ENCODE measurements at regions of chr22 and their contacts with region 1.

Region 1: DNA sequence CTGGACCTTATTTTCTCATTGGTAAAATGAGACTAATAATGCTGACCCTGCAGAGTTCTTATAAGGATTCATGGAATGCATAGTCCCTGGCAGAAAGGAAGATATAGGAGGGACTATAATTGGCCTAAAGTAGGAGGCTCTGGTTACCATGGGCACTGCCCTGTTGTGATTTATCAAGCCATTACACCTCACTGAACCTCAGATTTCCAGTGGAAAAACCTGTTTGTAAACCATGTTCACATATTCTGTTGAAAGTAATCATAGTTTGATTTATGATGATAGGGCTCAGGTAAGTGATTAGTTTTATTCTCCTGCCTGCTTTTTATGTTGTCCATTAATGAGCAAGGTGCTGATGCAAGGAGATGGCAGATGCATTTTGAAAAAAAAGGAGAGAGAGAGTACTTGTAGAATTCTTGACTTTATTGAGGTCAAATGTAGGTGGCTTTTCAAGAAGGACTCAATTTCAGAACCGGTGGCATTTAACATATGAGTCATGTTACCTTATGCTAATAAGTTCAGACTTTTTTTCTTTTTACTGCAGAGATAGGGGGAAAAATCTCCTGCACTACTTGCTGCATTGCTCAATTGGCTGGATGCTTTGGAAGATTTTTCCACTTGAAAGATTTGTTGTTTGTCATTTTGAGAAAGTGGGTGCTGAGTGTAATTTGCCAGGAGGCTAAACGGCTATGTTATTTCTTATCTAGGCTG is 14.6 kb downstream of the NF2 start:
- DNase-seq: no peak
- H3K4me3 Mint-ChIP-seq: no peak overlapping the region
- H3K27ac Mint-ChIP-seq: no peak overlapping the region
- H3K4me1 Mint-ChIP-seq: peaks cover 27% of the 10 kb centered on the region
- H3K27me3 Mint-ChIP-seq: no peaks in the 10 kb centered on the region

Region 2: DNA sequence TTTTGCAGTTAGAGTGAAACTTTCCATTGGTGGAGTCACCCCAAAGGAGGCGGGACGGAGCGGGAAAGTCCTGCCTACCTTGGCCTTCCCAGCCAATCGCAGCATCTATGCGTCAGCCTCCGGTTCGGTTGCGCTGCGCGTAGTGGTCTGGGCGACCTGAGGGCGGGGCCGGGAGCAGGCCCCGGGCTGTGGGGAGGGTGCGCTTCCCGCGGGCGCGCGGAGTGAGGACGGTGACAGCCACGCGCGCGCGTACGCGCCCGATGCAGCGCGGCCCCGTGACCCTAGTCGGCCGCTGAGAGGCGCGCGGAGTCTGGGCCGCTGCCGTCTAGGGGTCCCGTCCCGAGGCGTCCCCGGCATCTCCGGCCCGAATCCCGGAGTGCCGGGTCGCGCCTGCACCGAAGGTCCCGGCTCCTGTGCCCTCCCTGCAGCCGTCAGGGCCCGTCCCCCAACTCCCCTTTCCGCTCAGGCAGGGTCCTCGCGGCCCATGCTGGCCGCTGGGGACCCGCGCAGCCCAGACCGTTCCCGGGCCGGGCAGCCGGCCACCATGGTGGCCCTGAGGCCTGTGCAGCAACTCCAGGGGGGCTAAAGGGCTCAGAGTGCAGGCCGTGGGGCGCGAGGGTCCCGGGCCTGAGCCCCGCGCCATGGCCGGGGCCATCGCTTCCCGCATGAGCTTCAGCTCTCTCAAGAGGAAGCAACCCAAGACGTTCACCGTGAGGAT is 14.6 kb before region 1 on chr22 and contains the start of gene NF2:
- CTCF ChIA-PET with region 1: interaction called, 11 read pairs
- POLR2A ChIA-PET with region 1: no interaction called
- DNase-seq: peak; percentile 99
- H3K4me3 Mint-ChIP-seq: peak within 1 kb of the TSS; percentile 95
- H3K27ac Mint-ChIP-seq: peak within 1 kb of the TSS; percentile 98
- H3K4me1 Mint-ChIP-seq: peaks cover 34% of the 10 kb centered on the region
- H3K27me3 Mint-ChIP-seq: no peaks in the 10 kb centered on the region
- total RNA-seq, gene NF2: 56.7 to 57.2 TPM

Region 3: DNA sequence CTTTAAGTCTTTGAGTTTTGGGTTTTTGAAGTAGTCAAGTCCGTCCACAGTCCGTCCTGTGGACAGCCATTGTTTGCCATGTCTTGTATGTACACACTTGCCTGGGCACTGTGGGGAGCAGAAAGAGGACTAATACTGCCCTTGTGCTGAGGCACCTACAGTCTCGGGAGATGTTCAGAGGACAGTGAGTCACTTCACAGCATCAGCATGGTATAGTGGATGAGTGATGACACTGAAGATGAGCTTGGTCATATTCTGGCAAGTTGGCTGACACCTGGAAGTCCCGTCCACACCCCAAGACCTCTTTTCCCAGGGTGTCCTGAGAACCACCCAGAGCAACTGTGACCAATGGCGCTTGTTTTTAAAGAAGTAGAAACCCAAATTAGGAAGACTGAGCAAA is 14.6 kb after region 1 on chr22:
- CTCF ChIA-PET with region 1: no interaction called
- POLR2A ChIA-PET with region 1: no interaction called
- DNase-seq: no peak
- H3K4me3 Mint-ChIP-seq: no peak overlapping the region
- H3K27ac Mint-ChIP-seq: no peak overlapping the region
- H3K4me1 Mint-ChIP-seq: peaks cover 30% of the 10 kb centered on the region
- H3K27me3 Mint-ChIP-seq: no peaks in the 10 kb centered on the region

Region 4: GRCh38 chr22:29642694-29643093 is 24.6 kb after region 1 on chr22:
- CTCF ChIA-PET with region 1: no interaction called
- POLR2A ChIA-PET with region 1: no interaction called
- DNase-seq: no peak
- H3K4me3 Mint-ChIP-seq: no peak overlapping the region
- H3K27ac Mint-ChIP-seq: peak overlapping the region; percentile 31
- H3K4me1 Mint-ChIP-seq: peaks cover 27% of the 10 kb centered on the region
- H3K27me3 Mint-ChIP-seq: no peaks in the 10 kb centered on the region